GM12878 (cell line): ENCODE measurements at regions of chr7 and their contacts with region 1.

Region 1: GRCh38 chr7:120987683-120988590 is 574 bp upstream of the CPED1 start:
- DNase-seq: peak; percentile 47
- ATAC-seq: peak; percentile 97
- H3K4me3 ChIP-seq: peak overlapping the region; percentile 45; the same call in 1 of the 2 replicates
- H3K27ac ChIP-seq: no peak overlapping the region
- H3K4me1 ChIP-seq: peaks cover 21% of the 10 kb centered on the region
- H3K27me3 ChIP-seq: peaks cover 0 to 15% of the 10 kb centered on the region in 2 experiments
- CTCF ChIP-seq: peak; percentile 89 to 98 (median 95)
- EP300 ChIP-seq: no peak
- POLR2A ChIP-seq: no peak
- RAD21 ChIP-seq: peak; percentile 90

Region 2: DNA sequence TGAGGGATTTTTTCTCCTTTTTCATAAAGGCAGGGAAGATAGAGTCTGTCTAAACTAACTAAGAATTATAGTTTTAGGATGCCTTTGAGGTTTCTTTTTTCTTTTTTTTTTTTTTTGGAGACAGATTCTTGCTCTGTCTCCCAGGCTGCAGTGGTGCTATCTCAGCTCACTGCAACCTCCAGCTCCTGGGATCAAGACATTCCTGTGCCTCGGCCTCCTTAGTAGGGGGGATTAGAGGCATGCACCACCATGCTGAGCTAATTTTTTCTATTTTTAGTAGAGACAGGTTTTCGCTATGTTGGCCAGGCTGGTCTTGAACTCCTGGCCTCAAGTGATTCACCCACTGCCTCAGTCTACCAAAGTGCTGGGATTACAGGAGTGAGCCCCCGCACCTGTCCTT is 475.2 kb before region 1 on chr7:
- CTCF ChIA-PET with region 1: no interaction called
- POLR2A ChIA-PET with region 1: no interaction called
- RAD21 ChIA-PET with region 1: no interaction called
- SMC1A ChIA-PET with region 1: no interaction called
- in situ Hi-C with region 1: no loop called
- intact Hi-C with region 1: no loop called
- DNase-seq: no peak
- ATAC-seq: no peak
- H3K4me3 ChIP-seq: no peak overlapping the region
- H3K27ac ChIP-seq: no peak overlapping the region
- H3K4me1 ChIP-seq: no peaks in the 10 kb centered on the region
- H3K27me3 ChIP-seq: no peaks in the 10 kb centered on the region
- CTCF ChIP-seq: no peak
- EP300 ChIP-seq: no peak
- POLR2A ChIP-seq: no peak
- RAD21 ChIP-seq: no peak

Region 3: DNA sequence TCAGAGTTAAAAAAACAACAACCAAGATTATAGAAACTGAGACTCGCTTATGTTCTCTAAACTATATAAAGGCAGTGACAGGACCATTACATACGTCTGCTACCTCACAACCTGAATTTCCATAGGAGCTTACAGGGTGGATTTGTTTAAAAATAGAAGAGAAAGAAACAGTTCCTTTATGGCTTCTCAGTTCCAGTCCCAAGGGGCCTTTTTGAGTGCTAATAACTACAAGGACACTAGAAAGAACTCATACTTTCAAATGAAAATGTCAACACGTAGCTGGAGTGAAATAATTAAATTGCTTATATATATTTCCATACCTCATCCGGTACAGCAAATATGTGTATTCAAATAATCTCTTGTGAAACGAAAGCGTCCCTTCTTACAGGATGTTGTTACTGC is 149.7 kb before region 1 on chr7:
- CTCF ChIA-PET with region 1: no interaction called
- POLR2A ChIA-PET with region 1: no interaction called
- RAD21 ChIA-PET with region 1: no interaction called
- SMC1A ChIA-PET with region 1: no interaction called
- in situ Hi-C with region 1: no loop called
- intact Hi-C with region 1: no loop called
- DNase-seq: peak; percentile 68
- ATAC-seq: peak; percentile 76
- H3K4me3 ChIP-seq: no peak overlapping the region
- H3K27ac ChIP-seq: peak overlapping the region; percentile 39
- H3K4me1 ChIP-seq: peaks cover 7% of the 10 kb centered on the region; the same call in 1 of the 2 replicates
- H3K27me3 ChIP-seq: no peaks in the 10 kb centered on the region
- CTCF ChIP-seq: no peak
- EP300 ChIP-seq: peak; percentile 55 to 56; a peak in 3 of 4 replicates
- POLR2A ChIP-seq: no peak
- RAD21 ChIP-seq: no peak

Region 4: DNA sequence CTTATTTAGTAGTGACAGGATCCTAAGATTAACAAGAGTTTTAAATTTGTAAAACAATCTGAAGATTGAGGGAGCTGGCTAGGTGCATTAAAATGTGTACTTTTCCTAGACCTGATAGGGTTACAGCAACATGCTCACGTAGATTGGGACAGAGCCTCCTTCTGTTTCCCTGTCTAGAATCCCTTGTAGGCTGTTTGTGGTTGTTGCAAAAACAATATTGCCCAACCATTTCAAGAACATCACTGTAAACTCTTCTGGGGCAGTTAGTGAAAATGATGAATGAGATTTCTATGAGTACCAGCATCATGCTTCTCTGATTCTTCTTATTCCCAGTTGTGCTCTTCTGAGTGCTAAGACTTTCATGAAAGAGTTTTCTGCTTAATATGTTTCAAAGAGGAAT is 14.1 kb before region 1 on chr7:
- CTCF ChIA-PET with region 1: interaction called, 16 read pairs
- POLR2A ChIA-PET with region 1: interaction called, 3 read pairs
- RAD21 ChIA-PET with region 1: no interaction called
- SMC1A ChIA-PET with region 1: interaction called, 3 read pairs
- in situ Hi-C with region 1: no loop called
- intact Hi-C with region 1: no loop called
- DNase-seq: no peak
- ATAC-seq: no peak
- H3K4me3 ChIP-seq: no peak overlapping the region
- H3K27ac ChIP-seq: no peak overlapping the region
- H3K4me1 ChIP-seq: no peaks in the 10 kb centered on the region
- H3K27me3 ChIP-seq: no peaks in the 10 kb centered on the region
- CTCF ChIP-seq: no peak
- EP300 ChIP-seq: no peak
- POLR2A ChIP-seq: no peak
- RAD21 ChIP-seq: no peak

Region 5: GRCh38 chr7:121081327-121081936 is 93.5 kb after region 1 on chr7:
- CTCF ChIA-PET with region 1: interaction called, 111 read pairs
- POLR2A ChIA-PET with region 1: no interaction called
- RAD21 ChIA-PET with region 1: interaction called, 41 read pairs
- SMC1A ChIA-PET with region 1: interaction called, 40 read pairs
- in situ Hi-C with region 1: no loop called
- intact Hi-C with region 1: loop called (anchors 1 kb)
- DNase-seq: peak; percentile 5
- ATAC-seq: peak; percentile 81
- H3K4me3 ChIP-seq: no peak overlapping the region
- H3K27ac ChIP-seq: no peak overlapping the region
- H3K4me1 ChIP-seq: no peaks in the 10 kb centered on the region
- H3K27me3 ChIP-seq: peaks cover 0 to under 1% of the 10 kb centered on the region in 2 experiments; a peak in 2 of 4 replicates
- CTCF ChIP-seq: peak; percentile 57 to 72 (median 57); a peak in 5 of 6 replicates
- EP300 ChIP-seq: no peak
- POLR2A ChIP-seq: no peak
- RAD21 ChIP-seq: peak; percentile 77

Region 6: GRCh38 chr7:121099572-121099971 is 111.6 kb after region 1 on chr7:
- CTCF ChIA-PET with region 1: interaction called, 15 read pairs
- POLR2A ChIA-PET with region 1: no interaction called
- RAD21 ChIA-PET with region 1: interaction called, 7 read pairs
- SMC1A ChIA-PET with region 1: interaction called, 4 read pairs
- in situ Hi-C with region 1: loop called (anchors 5 kb)
- intact Hi-C with region 1: no loop called
- DNase-seq: no peak
- ATAC-seq: 0 out of 3 replicates have a peak, but pooled peaks have one; percentile 41
- H3K4me3 ChIP-seq: no peak overlapping the region
- H3K27ac ChIP-seq: no peak overlapping the region
- H3K4me1 ChIP-seq: no peaks in the 10 kb centered on the region
- H3K27me3 ChIP-seq: peaks cover 0 to 2% of the 10 kb centered on the region in 2 experiments; a peak in 1 of 4 replicates
- CTCF ChIP-seq: peak in 1 of 3 experiments; percentile 2; a peak in 1 of 6 replicates
- EP300 ChIP-seq: no peak
- POLR2A ChIP-seq: no peak
- RAD21 ChIP-seq: no peak

Region 7: GRCh38 chr7:121107923-121108498 is 120.1 kb after region 1 on chr7:
- CTCF ChIA-PET with region 1: interaction called, 41 read pairs
- POLR2A ChIA-PET with region 1: no interaction called
- RAD21 ChIA-PET with region 1: interaction called, 28 read pairs
- SMC1A ChIA-PET with region 1: interaction called, 16 read pairs
- in situ Hi-C with region 1: loop called (anchors 5 kb)
- intact Hi-C with region 1: loop called (anchors 5 kb)
- DNase-seq: peak; percentile 11
- ATAC-seq: peak; percentile 96
- H3K4me3 ChIP-seq: no peak overlapping the region
- H3K27ac ChIP-seq: no peak overlapping the region
- H3K4me1 ChIP-seq: no peaks in the 10 kb centered on the region
- H3K27me3 ChIP-seq: no peaks in the 10 kb centered on the region; a peak in 2 of 4 replicates
- CTCF ChIP-seq: peak; percentile 65 to 76 (median 74)
- EP300 ChIP-seq: no peak
- POLR2A ChIP-seq: no peak
- RAD21 ChIP-seq: peak; percentile 74

Region 8: DNA sequence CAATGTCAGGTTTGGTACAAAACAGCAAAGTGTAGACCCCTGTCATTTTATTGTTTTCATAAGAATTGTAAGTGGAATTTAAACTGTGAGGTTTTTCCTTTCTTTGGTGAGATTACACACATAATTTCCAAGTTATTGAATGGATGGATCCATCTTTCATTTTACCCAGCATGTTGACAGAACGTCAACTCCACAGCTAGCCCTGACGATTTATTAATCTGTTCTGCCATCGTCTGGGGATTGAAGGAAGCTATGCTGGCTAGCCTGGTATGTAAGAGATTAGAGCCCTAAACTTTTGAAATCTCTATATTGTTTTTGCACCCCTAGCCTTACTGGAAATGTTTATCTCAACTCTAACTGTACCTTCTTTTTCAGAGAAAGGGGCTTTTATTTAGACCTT is 349.5 kb after region 1 on chr7:
- CTCF ChIA-PET with region 1: interaction called, 4 read pairs
- POLR2A ChIA-PET with region 1: no interaction called
- RAD21 ChIA-PET with region 1: no interaction called
- SMC1A ChIA-PET with region 1: no interaction called
- in situ Hi-C with region 1: no loop called
- intact Hi-C with region 1: loop called (anchors 5 kb)
- DNase-seq: no peak
- ATAC-seq: peak; percentile 78
- H3K4me3 ChIP-seq: no peak overlapping the region
- H3K27ac ChIP-seq: no peak overlapping the region
- H3K4me1 ChIP-seq: no peaks in the 10 kb centered on the region
- H3K27me3 ChIP-seq: no peaks in the 10 kb centered on the region
- CTCF ChIP-seq: peak in 2 of 3 experiments; percentile 20 to 50; a peak in 3 of 6 replicates
- EP300 ChIP-seq: no peak
- POLR2A ChIP-seq: no peak
- RAD21 ChIP-seq: peak; percentile 50